SK-N-SH (cell line): ENCODE measurements at regions of chr13 and their contacts with region 1.

Region 1: DNA sequence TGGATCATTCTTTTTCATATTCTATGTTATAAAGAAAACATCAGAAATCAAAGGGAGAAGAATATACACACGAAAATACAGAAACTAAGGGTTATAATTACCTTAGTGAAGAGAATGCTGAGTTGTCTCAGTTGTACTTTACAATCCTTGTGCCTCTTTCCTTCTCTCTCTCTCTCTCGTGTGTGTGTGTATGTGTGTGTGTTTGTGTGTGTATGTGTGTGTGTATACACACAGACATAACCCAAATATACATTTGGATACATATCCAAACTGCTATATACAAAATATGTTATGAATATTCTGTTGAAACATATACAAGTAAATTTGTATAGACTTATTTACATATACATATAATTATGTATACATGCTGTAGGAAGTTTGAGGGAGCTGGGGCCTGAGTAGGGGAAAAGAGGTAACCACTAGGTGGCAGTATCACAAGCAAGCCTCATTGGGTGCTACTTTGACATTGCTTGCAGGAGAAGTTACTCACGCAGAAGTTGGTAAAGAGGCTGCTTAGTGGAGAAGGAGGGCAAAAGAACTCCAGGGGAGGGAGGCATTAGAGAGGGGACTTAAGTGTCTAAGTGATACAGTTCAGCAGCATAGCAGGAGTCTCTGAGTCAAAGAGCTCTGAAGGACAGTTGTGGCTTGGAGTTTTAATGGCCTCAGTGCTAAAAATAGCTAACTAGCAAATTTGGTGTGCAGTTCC is 465.1 kb upstream of the PCDH20 start:
- DNase-seq: peak; percentile 24
- H3K4me3 ChIP-seq: no peak overlapping the region
- H3K27ac ChIP-seq: no peak overlapping the region
- H3K4me1 ChIP-seq: no peaks in the 10 kb centered on the region
- H3K27me3 ChIP-seq: no peaks in the 10 kb centered on the region
- CTCF ChIP-seq: peak; percentile 67
- EP300 ChIP-seq: no peak
- RAD21 ChIP-seq: peak; percentile 14; the same call in 1 of the 2 replicates

Region 2: GRCh38 chr13:61215116-61215515 is 665.6 kb before region 1 on chr13:
- CTCF ChIA-PET with region 1: no interaction called
- POLR2A ChIA-PET with region 1: no interaction called
- DNase-seq: no peak
- H3K4me3 ChIP-seq: no peak overlapping the region
- H3K27ac ChIP-seq: no peak overlapping the region
- H3K4me1 ChIP-seq: no peaks in the 10 kb centered on the region
- H3K27me3 ChIP-seq: no peaks in the 10 kb centered on the region
- CTCF ChIP-seq: no peak
- EP300 ChIP-seq: no peak
- RAD21 ChIP-seq: no peak

Region 3: GRCh38 chr13:61891401-61891800 is 10.7 kb after region 1 on chr13:
- CTCF ChIA-PET with region 1: interaction called, 12 read pairs
- POLR2A ChIA-PET with region 1: no interaction called
- DNase-seq: no peak
- H3K4me3 ChIP-seq: no peak overlapping the region
- H3K27ac ChIP-seq: no peak overlapping the region
- H3K4me1 ChIP-seq: no peaks in the 10 kb centered on the region
- H3K27me3 ChIP-seq: no peaks in the 10 kb centered on the region
- CTCF ChIP-seq: no peak
- EP300 ChIP-seq: no peak
- RAD21 ChIP-seq: no peak

Region 4: DNA sequence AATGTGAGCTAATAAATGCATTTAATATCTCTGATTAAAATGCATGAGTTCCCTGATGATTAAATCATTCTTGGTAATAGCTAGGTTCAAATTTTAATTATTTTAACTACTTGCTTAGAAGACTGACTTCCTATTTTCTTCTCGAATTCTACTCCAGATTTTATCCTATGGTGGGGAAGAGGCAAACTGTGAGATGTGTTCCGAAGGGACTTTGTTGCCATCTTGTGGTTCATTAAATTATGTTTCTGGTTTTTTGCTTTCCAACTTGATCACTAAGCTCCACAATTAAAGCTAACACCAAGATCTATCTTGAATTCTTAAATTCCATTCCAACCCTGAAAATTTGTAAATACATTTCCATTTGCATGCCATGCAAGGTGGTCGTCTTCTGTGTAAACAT is 73.4 kb after region 1 on chr13:
- CTCF ChIA-PET with region 1: interaction called, 12 read pairs
- POLR2A ChIA-PET with region 1: no interaction called
- DNase-seq: peak; percentile 14
- H3K4me3 ChIP-seq: no peak overlapping the region; a peak in 1 of 4 replicates
- H3K27ac ChIP-seq: no peak overlapping the region
- H3K4me1 ChIP-seq: no peaks in the 10 kb centered on the region
- H3K27me3 ChIP-seq: no peaks in the 10 kb centered on the region
- CTCF ChIP-seq: peak; percentile 51
- EP300 ChIP-seq: no peak
- RAD21 ChIP-seq: peak; percentile 83

Region 5: DNA sequence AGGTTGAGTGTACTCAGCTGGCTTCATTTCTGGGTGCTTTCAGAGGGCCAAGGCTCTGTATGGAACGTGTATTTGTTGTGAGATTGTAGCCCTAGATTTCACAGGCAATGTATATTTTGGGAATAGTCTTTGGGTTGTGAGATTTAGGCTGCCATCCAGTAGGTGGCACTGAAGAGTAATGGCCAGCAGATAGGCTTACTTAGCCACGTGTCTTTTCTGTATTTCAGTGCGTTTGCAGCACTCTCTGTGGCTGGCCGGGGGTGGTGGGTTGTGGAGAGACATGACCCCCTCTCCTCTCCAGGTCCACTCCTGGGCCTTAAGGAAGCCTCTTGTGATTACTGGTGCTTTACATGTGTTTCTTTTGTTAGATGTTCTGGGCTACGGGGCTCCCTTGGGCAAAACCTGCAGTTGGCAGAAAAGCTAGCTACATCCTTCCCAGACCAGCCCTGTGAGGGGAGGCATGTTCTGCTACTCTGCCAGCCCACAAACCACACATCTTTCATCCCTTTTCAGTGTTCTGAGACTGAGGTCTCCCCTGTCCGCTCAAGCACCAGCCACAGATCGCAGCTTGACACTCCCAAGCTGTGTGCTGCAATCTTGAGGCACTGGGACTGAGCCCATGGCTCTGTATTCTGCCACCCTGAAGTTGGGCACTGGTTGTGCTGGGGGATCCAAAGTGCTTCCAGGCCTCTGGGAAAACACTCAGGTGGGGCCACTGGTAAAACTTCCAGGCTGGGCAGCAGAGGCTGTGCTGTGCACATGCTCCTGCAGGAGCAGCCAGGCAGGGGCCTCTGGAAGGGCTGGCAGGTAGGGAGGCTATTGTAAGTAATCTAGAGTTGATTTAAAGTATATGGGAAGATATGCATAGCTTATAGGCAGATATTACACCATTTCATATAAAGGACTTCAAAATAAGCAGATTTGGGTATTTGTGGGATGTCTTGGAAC is 631.7 kb after region 1 on chr13:
- CTCF ChIA-PET with region 1: no interaction called
- POLR2A ChIA-PET with region 1: no interaction called
- DNase-seq: peak; percentile 23
- H3K4me3 ChIP-seq: no peak overlapping the region; a peak in 1 of 4 replicates
- H3K27ac ChIP-seq: no peak overlapping the region
- H3K4me1 ChIP-seq: peaks cover 0 to 3% of the 10 kb centered on the region in 2 experiments; a peak in 2 of 4 replicates
- H3K27me3 ChIP-seq: no peaks in the 10 kb centered on the region
- CTCF ChIP-seq: peak; percentile 70
- EP300 ChIP-seq: no peak
- RAD21 ChIP-seq: peak; percentile 71